H1 (cell line): ENCODE measurements at regions of chr1 and their contacts with region 1.

Region 1: GRCh38 chr1:25695090-25695770 is 78.6 kb downstream of the MAN1C1 start:
- DNase-seq: no peak
- H3K4me3 ChIP-seq: no peak overlapping the region
- H3K27ac ChIP-seq: no peak overlapping the region
- H3K4me1 ChIP-seq: peaks cover 12 to 24% (median 17%) of the 10 kb centered on the region in 4 experiments
- H3K27me3 ChIP-seq: no peaks in the 10 kb centered on the region
- CTCF ChIP-seq: peak; percentile 2 to 28 (median 26); a peak in 3 of 4 replicates
- EP300 ChIP-seq: no peak
- POLR2A ChIP-seq: no peak
- RAD21 ChIP-seq: peak; percentile 34 to 40; a peak in 3 of 4 replicates

Region 2: DNA sequence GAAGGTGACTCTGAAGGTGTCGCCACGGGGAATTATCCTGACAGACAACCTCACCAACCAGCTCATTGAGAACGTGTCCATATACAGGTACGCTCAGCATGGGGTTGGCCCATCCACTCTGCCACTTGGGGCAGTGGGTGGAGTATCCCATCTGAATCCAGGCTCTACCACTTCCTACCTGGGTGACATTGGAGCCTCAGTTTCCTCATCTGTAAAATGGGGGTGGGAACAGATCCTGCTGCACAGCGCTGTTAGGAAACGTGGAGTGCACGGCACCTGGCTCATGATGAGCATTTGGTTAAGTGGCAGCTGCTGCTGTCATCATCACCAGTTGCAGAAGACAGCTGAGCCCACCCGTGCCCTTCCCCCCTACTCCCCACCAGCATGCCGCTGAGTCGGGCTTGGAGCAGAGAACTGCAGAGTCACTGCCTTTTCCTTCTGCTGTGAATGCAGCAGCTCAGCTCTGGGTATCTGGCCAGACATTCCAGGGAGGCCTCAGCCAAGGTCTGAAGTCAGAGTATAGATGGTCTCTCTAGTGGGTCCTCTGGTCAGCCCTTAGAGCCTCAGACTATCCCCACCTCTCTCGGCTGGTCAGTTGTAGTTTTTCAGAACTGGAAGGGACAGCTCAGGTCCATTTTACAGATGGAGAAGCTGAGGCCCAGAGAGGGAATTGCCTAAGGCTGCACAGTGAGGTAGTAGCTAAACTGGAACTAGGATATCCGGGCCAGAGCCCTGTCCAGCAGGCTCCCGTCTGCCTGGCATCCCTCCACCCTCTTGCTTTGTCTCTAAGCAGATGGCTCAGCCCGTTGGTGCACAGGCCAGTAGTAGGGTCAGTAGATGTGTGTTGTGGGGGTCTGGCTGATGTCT is 140.1 kb before region 1 on chr1:
- CTCF ChIA-PET with region 1: no interaction called
- POLR2A ChIA-PET with region 1: no interaction called
- DNase-seq: no peak
- H3K4me3 ChIP-seq: no peak overlapping the region
- H3K27ac ChIP-seq: no peak overlapping the region
- H3K4me1 ChIP-seq: no peaks in the 10 kb centered on the region
- H3K27me3 ChIP-seq: no peaks in the 10 kb centered on the region
- CTCF ChIP-seq: no peak
- EP300 ChIP-seq: no peak
- POLR2A ChIP-seq: no peak
- RAD21 ChIP-seq: no peak

Region 3: GRCh38 chr1:25566730-25567341 is 128.4 kb before region 1 on chr1:
- CTCF ChIA-PET with region 1: interaction called, 12 read pairs
- POLR2A ChIA-PET with region 1: no interaction called
- DNase-seq: no peak
- H3K4me3 ChIP-seq: no peak overlapping the region
- H3K27ac ChIP-seq: no peak overlapping the region
- H3K4me1 ChIP-seq: peaks cover 0 to 26% (median 13%) of the 10 kb centered on the region in 4 experiments; a peak in 6 of 7 replicates
- H3K27me3 ChIP-seq: no peaks in the 10 kb centered on the region
- CTCF ChIP-seq: peak in 2 of 3 experiments; percentile 24 to 37; a peak in 2 of 4 replicates
- EP300 ChIP-seq: no peak
- POLR2A ChIP-seq: no peak
- RAD21 ChIP-seq: 0 out of 4 replicates have a peak, but pooled peaks of 1 of the 2 experiments have one; percentile 13

Region 4: DNA sequence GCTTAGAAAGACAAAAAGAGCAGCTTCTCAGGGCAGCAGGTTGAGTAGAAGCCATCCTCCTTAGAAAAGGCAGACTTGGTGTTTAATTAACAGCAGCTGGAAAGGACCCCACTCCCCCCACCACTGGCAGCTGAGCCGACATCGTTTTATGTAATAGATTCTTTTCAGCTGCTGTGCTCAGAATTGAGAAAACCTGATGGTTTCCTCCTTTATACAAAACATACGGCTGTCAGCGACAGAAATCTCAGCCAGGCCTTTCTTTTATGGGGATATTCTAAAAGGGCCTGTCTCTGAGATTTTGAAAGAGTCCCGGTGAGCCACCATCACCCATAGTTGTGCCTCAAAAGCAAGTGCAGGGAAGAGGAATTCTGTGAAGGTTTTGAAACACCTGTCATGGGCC is 28.7 kb before region 1 on chr1:
- CTCF ChIA-PET with region 1: interaction called, 10 read pairs
- POLR2A ChIA-PET with region 1: no interaction called
- DNase-seq: no peak
- H3K4me3 ChIP-seq: no peak overlapping the region
- H3K27ac ChIP-seq: no peak overlapping the region
- H3K4me1 ChIP-seq: peaks cover 0 to 10% (median 2%) of the 10 kb centered on the region in 4 experiments; a peak in 5 of 7 replicates
- H3K27me3 ChIP-seq: no peaks in the 10 kb centered on the region
- CTCF ChIP-seq: no peak
- EP300 ChIP-seq: no peak
- POLR2A ChIP-seq: no peak
- RAD21 ChIP-seq: no peak

Region 5: DNA sequence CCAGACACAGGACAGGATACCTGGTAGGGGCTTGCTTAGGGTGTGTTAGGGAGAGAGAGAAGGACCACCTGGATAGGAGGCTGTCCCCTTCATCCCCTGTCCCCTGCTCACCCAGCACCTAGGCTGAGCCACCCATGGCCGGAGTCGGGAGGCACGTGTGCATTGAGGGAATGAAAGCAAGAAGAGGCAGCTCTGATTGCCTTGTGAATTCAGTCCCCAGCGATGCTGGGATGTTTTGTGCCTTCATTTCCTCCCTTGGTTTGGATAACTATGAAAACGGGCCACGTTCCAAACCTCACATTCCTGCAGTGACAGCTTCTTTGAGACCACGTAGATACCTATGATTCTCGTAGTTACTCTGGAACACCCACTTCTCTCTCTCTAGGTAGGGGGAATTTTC is 11.5 kb before region 1 on chr1:
- CTCF ChIA-PET with region 1: interaction called, 36 read pairs
- POLR2A ChIA-PET with region 1: interaction called, 6 read pairs
- DNase-seq: no peak
- H3K4me3 ChIP-seq: no peak overlapping the region
- H3K27ac ChIP-seq: no peak overlapping the region
- H3K4me1 ChIP-seq: no peaks in the 10 kb centered on the region
- H3K27me3 ChIP-seq: no peaks in the 10 kb centered on the region; a peak in 1 of 7 replicates
- CTCF ChIP-seq: no peak
- EP300 ChIP-seq: no peak
- POLR2A ChIP-seq: no peak
- RAD21 ChIP-seq: no peak

Region 6: GRCh38 chr1:25737130-25737529 is 41.9 kb after region 1 on chr1:
- CTCF ChIA-PET with region 1: interaction called, 18 read pairs
- POLR2A ChIA-PET with region 1: no interaction called
- DNase-seq: no peak
- H3K4me3 ChIP-seq: no peak overlapping the region
- H3K27ac ChIP-seq: no peak overlapping the region
- H3K4me1 ChIP-seq: no peaks in the 10 kb centered on the region; a peak in 1 of 7 replicates
- H3K27me3 ChIP-seq: no peaks in the 10 kb centered on the region; a peak in 1 of 7 replicates
- CTCF ChIP-seq: no peak
- EP300 ChIP-seq: no peak
- POLR2A ChIP-seq: no peak
- RAD21 ChIP-seq: no peak

Region 7: DNA sequence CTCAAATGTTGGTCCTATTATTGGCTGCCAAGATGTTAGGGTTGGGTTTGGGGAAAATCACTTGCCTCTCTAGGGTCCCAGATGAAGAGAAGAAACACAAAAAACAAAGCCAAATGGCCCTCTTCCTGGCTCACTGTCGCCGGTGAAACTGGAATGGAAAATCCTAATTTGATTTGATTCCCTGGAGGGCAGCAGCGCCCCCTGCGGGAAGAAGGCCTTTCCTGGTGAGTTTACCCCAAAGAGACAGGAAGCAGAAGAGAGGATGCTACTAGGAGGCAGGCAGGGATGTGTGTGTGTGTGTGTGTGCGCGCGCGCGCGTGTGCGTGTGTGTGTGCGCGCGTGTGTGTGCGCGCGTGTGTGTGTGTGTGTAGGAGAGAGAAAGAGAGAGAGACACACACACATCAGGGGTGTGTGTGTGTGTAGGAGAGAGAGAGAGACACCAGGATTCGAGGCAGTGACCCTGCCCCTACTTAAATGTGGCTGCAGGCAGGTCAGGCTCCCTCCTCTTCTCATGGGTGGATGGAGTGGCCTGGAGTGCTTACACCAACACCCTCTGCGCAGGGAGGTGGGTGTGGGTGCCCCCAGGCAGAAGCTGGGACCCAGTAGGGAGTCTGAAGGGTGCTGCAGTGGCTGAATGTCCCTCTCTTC is 101.7 kb after region 1 on chr1:
- CTCF ChIA-PET with region 1: interaction called, 16 read pairs
- POLR2A ChIA-PET with region 1: no interaction called
- DNase-seq: peak; percentile 65 to 98
- H3K4me3 ChIP-seq: no peak overlapping the region
- H3K27ac ChIP-seq: no peak overlapping the region
- H3K4me1 ChIP-seq: peaks cover 4 to 14% (median 11%) of the 10 kb centered on the region in 4 experiments; a peak in 6 of 7 replicates
- H3K27me3 ChIP-seq: peaks cover 0 to 2% (median under 1%) of the 10 kb centered on the region in 4 experiments; a peak in 3 of 7 replicates
- CTCF ChIP-seq: peak; percentile 86 to 89 (median 87)
- EP300 ChIP-seq: no peak
- POLR2A ChIP-seq: no peak
- RAD21 ChIP-seq: peak; percentile 87 to 92